Endothelial cell of umbilical vein (primary cell): ENCODE measurements at regions of chr3 and their contacts with region 1.

Region 1: GRCh38 chr3:173045770-173046382 is 95.2 kb downstream of the SPATA16 start:
- DNase-seq: peak; percentile 35
- H3K4me3 ChIP-seq: no peak overlapping the region
- H3K27ac ChIP-seq: no peak overlapping the region
- H3K4me1 ChIP-seq: no peaks in the 10 kb centered on the region
- H3K27me3 ChIP-seq: no peaks in the 10 kb centered on the region
- CTCF ChIP-seq: peak in 1 of 2 donors; percentile 4
- POLR2A ChIP-seq: no peak

Region 2: DNA sequence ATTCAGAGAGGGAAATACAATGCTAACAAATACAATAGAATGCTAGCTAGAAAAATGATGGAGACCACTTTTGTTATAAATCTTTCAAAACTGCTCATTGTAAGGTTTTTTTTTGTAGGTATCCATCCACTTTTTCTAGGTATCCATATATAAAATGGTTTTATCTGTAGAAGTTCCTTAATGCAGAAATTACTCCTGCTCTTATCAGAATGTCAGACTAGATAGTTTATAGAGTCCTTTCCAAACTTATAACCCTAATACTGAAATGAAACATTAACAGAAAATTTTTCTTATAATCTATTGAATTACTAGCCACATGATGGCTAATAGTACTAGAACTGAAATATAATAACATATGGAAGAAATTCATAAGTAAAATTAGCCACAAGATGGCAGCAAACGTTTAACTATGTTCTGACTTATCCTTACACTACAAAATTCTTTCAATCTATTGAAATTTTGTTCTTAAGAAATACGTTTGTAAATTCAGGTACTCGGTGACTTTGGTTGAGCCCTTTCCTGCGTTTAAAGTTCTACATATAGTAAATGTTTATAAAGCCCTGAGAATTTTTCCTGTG is 236.8 kb before region 1 on chr3:
- CTCF ChIA-PET with region 1: interaction called, 16 read pairs
- POLR2A ChIA-PET with region 1: no interaction called
- dilution Hi-C with region 1: no loop called
- intact Hi-C with region 1: loop called (anchors 1 kb)
- DNase-seq: peak; percentile 63
- H3K4me3 ChIP-seq: no peak overlapping the region
- H3K27ac ChIP-seq: no peak overlapping the region
- H3K4me1 ChIP-seq: no peaks in the 10 kb centered on the region
- H3K27me3 ChIP-seq: no peaks in the 10 kb centered on the region
- CTCF ChIP-seq: peak in 1 of 2 donors; percentile 2
- POLR2A ChIP-seq: no peak

Region 3: GRCh38 chr3:172982736-172983364 is 63.0 kb before region 1 on chr3:
- CTCF ChIA-PET with region 1: interaction called, 7 read pairs
- POLR2A ChIA-PET with region 1: no interaction called
- dilution Hi-C with region 1: no loop called
- intact Hi-C with region 1: loop called (anchors 1 kb)
- DNase-seq: peak; percentile 39
- H3K4me3 ChIP-seq: no peak overlapping the region
- H3K27ac ChIP-seq: no peak overlapping the region
- H3K4me1 ChIP-seq: no peaks in the 10 kb centered on the region
- H3K27me3 ChIP-seq: no peaks in the 10 kb centered on the region
- CTCF ChIP-seq: peak in 1 of 2 donors; percentile 6
- POLR2A ChIP-seq: no peak